ENCODE measurements at regions of chr2 and their contacts with region 1.

Region 1: GRCh38 chr2:162587674-162588305 is 243.9 kb downstream of the GCA start:
- DNase-seq: no peak
- H3K4me3 ChIP-seq: no peak overlapping the region
- H3K4me3 Mint-ChIP-seq: no peak overlapping the region
- H3K27ac Mint-ChIP-seq: no peak overlapping the region
- H3K4me1 ChIP-seq: peaks cover 5% of the 10 kb centered on the region
- H3K4me1 Mint-ChIP-seq: peaks cover 3% of the 10 kb centered on the region
- H3K27me3 ChIP-seq: no peaks in the 10 kb centered on the region
- H3K27me3 Mint-ChIP-seq: no peaks in the 10 kb centered on the region
- CTCF ChIP-seq: no peak

Region 2: DNA sequence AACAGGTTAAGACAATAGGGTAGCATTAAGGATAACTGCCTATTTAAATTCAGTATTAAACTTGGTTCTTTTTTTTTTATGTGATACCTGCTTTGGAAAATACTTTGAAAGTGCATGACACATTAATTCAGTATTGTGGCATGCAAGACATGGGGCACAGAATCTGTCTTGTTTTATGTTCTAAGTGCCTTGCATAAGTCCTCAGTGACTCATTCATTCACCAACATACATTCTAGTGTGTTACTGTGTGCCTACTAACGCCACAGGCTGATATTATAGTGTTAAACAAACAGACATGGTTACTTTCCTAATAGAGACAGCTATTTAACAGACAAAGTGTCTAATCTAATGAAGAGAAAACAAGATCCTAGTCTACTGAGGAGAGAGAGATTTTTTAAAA is 152.1 kb before region 1 on chr2:
- CTCF ChIA-PET with region 1: no interaction called
- POLR2A ChIA-PET with region 1: no interaction called
- intact Hi-C with region 1: loop called (anchors 5 kb)
- DNase-seq: no peak
- H3K4me3 ChIP-seq: no peak overlapping the region
- H3K4me3 Mint-ChIP-seq: no peak overlapping the region
- H3K27ac Mint-ChIP-seq: no peak overlapping the region
- H3K4me1 ChIP-seq: no peaks in the 10 kb centered on the region
- H3K4me1 Mint-ChIP-seq: no peaks in the 10 kb centered on the region
- H3K27me3 ChIP-seq: no peaks in the 10 kb centered on the region
- H3K27me3 Mint-ChIP-seq: no peaks in the 10 kb centered on the region
- CTCF ChIP-seq: no peak

Measured in Caco-2 (cell line).